ENCODE measurements at regions of chr22 and their contacts with region 1.

Region 1: GRCh38 chr22:23156286-23156685 is 11.0 kb downstream of the RAB36 start:
- DNase-seq: no peak
- H3K4me3 ChIP-seq: no peak overlapping the region
- H3K4me3 Mint-ChIP-seq: no peak overlapping the region
- H3K27ac Mint-ChIP-seq: peak overlapping the region; percentile 96
- H3K4me1 ChIP-seq: peaks cover 41% of the 10 kb centered on the region
- H3K4me1 Mint-ChIP-seq: peaks cover 14% of the 10 kb centered on the region
- H3K27me3 ChIP-seq: no peaks in the 10 kb centered on the region
- H3K27me3 Mint-ChIP-seq: no peaks in the 10 kb centered on the region
- CTCF ChIP-seq: peak in 1 of 2 experiments; percentile 20

Region 2: GRCh38 chr22:23142546-23143105 is 13.7 kb before region 1 on chr22:
- CTCF ChIA-PET with region 1: interaction called, 12 read pairs
- POLR2A ChIA-PET with region 1: interaction called, 6 read pairs
- intact Hi-C with region 1: loop called (anchors 1 kb)
- DNase-seq: no peak
- H3K4me3 ChIP-seq: no peak overlapping the region
- H3K4me3 Mint-ChIP-seq: peak overlapping the region; percentile 70
- H3K27ac Mint-ChIP-seq: peak overlapping the region; percentile 94
- H3K4me1 ChIP-seq: peaks cover 28% of the 10 kb centered on the region
- H3K4me1 Mint-ChIP-seq: peaks cover 22% of the 10 kb centered on the region
- H3K27me3 ChIP-seq: no peaks in the 10 kb centered on the region
- H3K27me3 Mint-ChIP-seq: no peaks in the 10 kb centered on the region
- CTCF ChIP-seq: no peak